Right ventricle myocardium superior (tissue), 1 donor: ENCODE measurements at regions of chr3 and their contacts with region 1.

Region 1: GRCh38 chr3:151923901-151924300 is 50.5 kb downstream of the SUCNR1 start:
- DNase-seq: no peak
- ATAC-seq: no peak

Region 2: GRCh38 chr3:151468284-151468917 is 455.5 kb before region 1 on chr3:
- intact Hi-C with region 1: loop called (anchors 5 kb)
- DNase-seq: no peak
- ATAC-seq: peak; percentile 79

Region 3: GRCh38 chr3:151890721-151891141 is 33.2 kb before region 1 on chr3:
- intact Hi-C with region 1: no loop called
- DNase-seq: no peak
- ATAC-seq: no peak